Activated CD4-positive, alpha-beta memory T cell treated with anti-CD3 and anti-CD28 coated beads for 36 hours (primary cell): ENCODE measurements at regions of chr16 and their contacts with region 1.

Region 1: GRCh38 chr16:53664724-53665345 is 38.8 kb downstream of the RPGRIP1L start:
- DNase-seq: peak; percentile 53
- H3K4me3 Mint-ChIP-seq: no peak overlapping the region
- H3K27ac Mint-ChIP-seq: peak overlapping the region; percentile 2
- H3K4me1 Mint-ChIP-seq: peaks cover 17% of the 10 kb centered on the region
- H3K27me3 Mint-ChIP-seq: no peaks in the 10 kb centered on the region

Region 2: GRCh38 chr16:53530046-53530445 is 134.8 kb before region 1 on chr16:
- CTCF ChIA-PET with region 1: no interaction called
- POLR2A ChIA-PET with region 1: interaction called, 3 read pairs
- intact Hi-C with region 1: loop called (anchors 1 kb)
- DNase-seq: no peak
- H3K4me3 Mint-ChIP-seq: no peak overlapping the region
- H3K27ac Mint-ChIP-seq: no peak overlapping the region
- H3K4me1 Mint-ChIP-seq: peaks cover 10% of the 10 kb centered on the region
- H3K27me3 Mint-ChIP-seq: no peaks in the 10 kb centered on the region

Region 3: GRCh38 chr16:53703590-53704444 is 39.0 kb after region 1 on chr16 and contains the starts of genes FTO and RPGRIP1L:
- CTCF ChIA-PET with region 1: no interaction called
- POLR2A ChIA-PET with region 1: interaction called, 4 read pairs
- intact Hi-C with region 1: loop called (anchors 1 kb)
- DNase-seq: peak; percentile 99
- H3K4me3 Mint-ChIP-seq: peak within 1 kb of the TSS; percentile 99
- H3K27ac Mint-ChIP-seq: peak within 1 kb of the TSS; percentile 91
- H3K4me1 Mint-ChIP-seq: peaks cover 34% of the 10 kb centered on the region
- H3K27me3 Mint-ChIP-seq: no peaks in the 10 kb centered on the region
- total RNA-seq, gene FTO: 50.7 to 53.1 TPM
- total RNA-seq, gene RPGRIP1L: 6.2 to 6.5 TPM

Region 4: DNA sequence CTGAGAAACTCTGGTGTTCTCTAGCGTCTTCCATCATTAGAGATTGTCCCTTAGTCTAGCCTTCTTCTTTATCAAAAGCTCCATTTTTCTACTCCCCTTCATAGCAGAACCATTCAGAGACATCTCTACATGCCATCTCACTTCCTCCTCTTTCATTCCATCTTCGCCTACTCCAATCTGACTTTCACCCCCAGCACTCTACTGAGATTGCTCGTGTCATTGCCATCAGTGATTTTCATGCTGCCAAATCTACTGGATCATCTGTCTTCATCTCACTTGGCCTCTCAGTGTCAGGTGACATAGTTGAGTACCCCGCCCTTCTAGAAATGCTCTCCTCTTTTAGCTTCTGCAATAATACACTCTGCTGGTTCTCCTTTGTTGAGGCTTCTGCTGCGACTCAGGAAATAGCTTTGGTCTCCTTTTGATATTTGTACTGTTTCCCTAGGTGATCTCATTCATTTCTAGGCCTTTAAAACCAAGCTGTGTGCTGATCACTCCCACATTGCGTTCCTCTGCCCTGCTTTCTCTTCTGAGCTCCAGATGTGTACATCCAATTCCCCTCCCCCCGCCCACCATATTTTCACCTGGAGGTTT is 158.2 kb after region 1 on chr16:
- CTCF ChIA-PET with region 1: no interaction called
- POLR2A ChIA-PET with region 1: no interaction called
- intact Hi-C with region 1: loop called (anchors 1 kb)
- DNase-seq: peak; percentile 27
- H3K4me3 Mint-ChIP-seq: no peak overlapping the region
- H3K27ac Mint-ChIP-seq: no peak overlapping the region
- H3K4me1 Mint-ChIP-seq: peaks cover 19% of the 10 kb centered on the region
- H3K27me3 Mint-ChIP-seq: no peaks in the 10 kb centered on the region

Region 5: DNA sequence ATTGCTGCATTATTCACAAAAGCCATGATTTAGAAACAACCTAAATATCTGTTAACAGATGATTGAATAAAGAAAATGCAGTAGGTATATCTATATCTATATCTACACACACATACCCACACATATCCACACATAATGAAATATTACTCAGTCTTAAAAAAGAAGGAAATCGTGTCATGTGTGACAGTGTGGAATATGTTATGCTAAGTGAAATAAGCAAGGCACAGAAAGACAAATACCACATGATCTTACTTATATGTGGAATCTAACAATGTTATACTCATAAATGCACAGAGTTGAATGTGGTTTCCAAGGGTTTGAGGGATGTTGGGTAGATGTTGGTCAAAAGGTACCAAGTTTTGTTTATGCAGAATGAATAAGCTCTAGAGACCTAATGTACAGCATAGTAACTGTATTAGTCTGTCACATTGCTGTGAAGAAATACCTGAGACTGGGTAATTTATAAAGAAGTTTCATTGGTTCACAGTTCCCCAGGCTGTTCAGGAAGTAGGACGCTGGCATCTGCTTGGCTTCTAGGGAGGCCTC is 195.2 kb after region 1 on chr16:
- CTCF ChIA-PET with region 1: no interaction called
- POLR2A ChIA-PET with region 1: no interaction called
- intact Hi-C with region 1: loop called (anchors 1 kb)
- DNase-seq: no peak
- H3K4me3 Mint-ChIP-seq: no peak overlapping the region
- H3K27ac Mint-ChIP-seq: no peak overlapping the region
- H3K4me1 Mint-ChIP-seq: peaks cover 5% of the 10 kb centered on the region
- H3K27me3 Mint-ChIP-seq: no peaks in the 10 kb centered on the region